ENCODE measurements at regions of chr16 and their contacts with region 1.

Region 1: GRCh38 chr16:68528686-68529379 is 10.3 kb upstream of the ZFP90 start:
- DNase-seq: peak; percentile 91
- H3K4me3 Mint-ChIP-seq: peak overlapping the region; percentile 61
- H3K27ac Mint-ChIP-seq: no peak overlapping the region
- H3K4me1 Mint-ChIP-seq: peaks cover 25% of the 10 kb centered on the region
- H3K27me3 Mint-ChIP-seq: no peaks in the 10 kb centered on the region

Region 2: GRCh38 chr16:68406451-68407152 is 122.2 kb before region 1 on chr16:
- CTCF ChIA-PET with region 1: no interaction called
- POLR2A ChIA-PET with region 1: no interaction called
- DNase-seq: no peak
- H3K4me3 Mint-ChIP-seq: no peak overlapping the region
- H3K27ac Mint-ChIP-seq: no peak overlapping the region
- H3K4me1 Mint-ChIP-seq: peaks cover 2% of the 10 kb centered on the region
- H3K27me3 Mint-ChIP-seq: peaks cover 13% of the 10 kb centered on the region

Region 3: DNA sequence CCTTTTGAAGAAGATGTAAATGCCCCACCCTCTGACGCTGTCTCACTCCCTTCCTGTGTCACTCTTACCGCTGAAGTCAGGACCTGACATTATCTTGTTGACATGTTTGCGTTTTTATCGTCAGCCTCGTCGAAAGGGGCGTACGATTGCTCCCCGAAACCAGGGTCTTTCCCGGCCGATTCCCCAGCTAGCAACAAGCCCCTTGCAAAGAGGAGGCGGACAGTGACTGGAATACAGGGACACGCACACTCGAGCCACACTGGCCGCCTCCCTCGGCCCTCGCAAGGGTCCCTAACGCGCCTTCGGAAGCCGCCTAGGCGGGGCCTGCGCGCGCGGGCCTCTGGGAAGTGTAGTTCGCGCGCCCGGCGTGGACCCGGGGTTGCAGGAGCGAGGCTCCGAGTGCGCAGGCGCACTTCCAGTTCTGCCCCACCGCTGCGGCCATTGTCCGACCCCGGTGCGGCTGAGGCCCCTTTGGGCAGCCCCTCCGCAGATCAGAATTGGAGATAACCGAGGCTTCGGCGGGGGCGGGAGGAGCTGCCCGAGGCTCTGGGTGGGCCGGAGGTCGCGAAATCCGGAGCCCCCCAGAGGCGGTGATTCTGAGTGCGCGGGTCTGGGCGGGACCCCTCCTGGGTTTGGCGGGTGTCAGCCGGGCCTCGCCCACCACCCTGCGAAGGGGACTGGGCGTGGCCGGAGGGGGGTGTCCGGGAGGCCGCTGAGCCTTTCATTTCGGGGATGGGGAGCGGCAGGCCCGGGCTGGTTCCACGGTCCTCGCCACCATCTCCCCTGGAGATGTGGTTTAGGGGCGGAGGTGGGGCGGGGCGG is 10.3 kb after region 1 on chr16 and contains the start of gene ZFP90:
- CTCF ChIA-PET with region 1: interaction called, 5 read pairs
- POLR2A ChIA-PET with region 1: interaction called, 20 read pairs
- DNase-seq: peak; percentile 88
- H3K4me3 Mint-ChIP-seq: peak within 1 kb of the TSS; percentile 90
- H3K27ac Mint-ChIP-seq: peak within 1 kb of the TSS; percentile 95
- H3K4me1 Mint-ChIP-seq: peaks cover 19% of the 10 kb centered on the region
- H3K27me3 Mint-ChIP-seq: no peaks in the 10 kb centered on the region
- total RNA-seq, gene ZFP90: 35.2 to 36.5 TPM

Region 4: DNA sequence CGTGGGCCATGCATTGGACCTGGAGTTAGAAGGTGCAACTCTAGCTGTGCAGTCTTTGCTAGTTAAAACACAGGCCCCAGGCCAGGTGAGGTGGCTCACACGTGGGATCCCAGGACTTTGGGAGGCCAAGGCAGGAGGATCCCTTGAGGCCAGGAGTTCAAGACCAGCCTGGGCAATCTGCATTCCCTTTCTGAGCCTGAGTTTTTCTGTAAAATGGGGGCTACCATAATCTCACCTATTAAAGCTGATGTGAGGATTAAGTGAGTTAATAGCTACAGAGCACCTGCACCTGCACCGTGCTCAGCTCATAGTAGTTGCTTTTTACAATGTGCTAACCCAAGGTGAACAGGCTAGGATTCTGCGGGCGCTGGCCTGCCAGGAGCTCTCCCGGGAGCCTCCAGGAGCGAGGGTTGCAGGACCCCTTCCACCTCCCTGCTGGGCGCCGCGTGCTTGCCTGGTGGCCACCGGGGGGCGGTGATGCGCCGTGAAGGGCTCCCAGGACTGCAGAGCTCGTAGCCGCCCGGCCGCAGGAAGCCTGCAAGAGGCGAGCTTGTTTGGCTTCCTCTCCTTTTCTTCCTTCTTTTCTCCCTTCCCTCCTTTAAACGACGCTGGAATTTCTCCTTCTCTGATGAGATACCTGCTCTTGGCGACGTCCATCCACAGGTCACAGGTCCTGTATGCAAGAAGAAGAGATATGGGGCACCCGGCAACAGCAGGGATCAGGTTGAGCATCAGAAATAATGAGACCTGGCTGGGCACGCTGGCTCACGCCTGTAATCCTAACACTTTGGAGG is 61.6 kb after region 1 on chr16:
- CTCF ChIA-PET with region 1: interaction called, 52 read pairs
- POLR2A ChIA-PET with region 1: interaction called, 4 read pairs
- DNase-seq: peak; percentile 60
- H3K4me3 Mint-ChIP-seq: no peak overlapping the region
- H3K27ac Mint-ChIP-seq: no peak overlapping the region
- H3K4me1 Mint-ChIP-seq: peaks cover 2% of the 10 kb centered on the region
- H3K27me3 Mint-ChIP-seq: no peaks in the 10 kb centered on the region

Region 5: DNA sequence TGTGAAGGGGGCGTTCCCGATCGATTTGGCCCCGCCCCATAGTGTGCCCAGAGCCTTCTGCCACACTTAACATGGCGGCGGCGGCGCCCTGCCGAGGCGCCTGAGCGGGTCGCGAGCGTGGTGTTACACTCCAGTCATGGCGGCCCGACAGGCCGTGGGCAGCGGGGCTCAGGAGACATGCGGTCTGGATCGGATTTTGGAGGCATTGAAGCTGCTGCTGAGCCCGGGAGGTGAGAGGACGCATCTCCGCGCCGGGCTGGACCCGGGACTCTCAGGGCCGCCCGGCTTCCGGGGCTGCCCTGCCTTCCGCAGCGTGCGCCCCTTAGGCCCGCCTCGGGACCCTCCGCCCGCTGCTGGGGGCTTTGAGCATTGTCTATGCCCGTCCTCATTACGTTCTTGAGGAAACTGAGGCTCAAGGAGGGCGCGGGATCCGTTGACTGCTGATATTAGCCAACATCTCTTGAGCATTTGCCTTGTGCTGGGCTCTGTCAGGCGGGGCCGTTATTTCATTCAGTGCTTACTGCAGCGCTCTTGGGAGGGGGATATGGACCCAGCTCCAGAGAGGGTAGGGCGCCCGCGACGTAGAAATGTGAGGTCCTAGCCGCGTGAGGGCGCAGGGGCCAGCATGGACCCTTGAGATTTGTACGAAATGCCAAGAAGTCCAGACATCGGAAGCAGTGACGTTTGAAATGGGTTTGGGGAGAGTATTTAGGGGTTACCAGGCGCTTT is 314.8 kb after region 1 on chr16 and contains the start of gene TANGO6:
- CTCF ChIA-PET with region 1: interaction called, 10 read pairs
- POLR2A ChIA-PET with region 1: no interaction called
- DNase-seq: peak; percentile 89
- H3K4me3 Mint-ChIP-seq: peak within 1 kb of the TSS; percentile 97
- H3K27ac Mint-ChIP-seq: peak within 1 kb of the TSS; percentile 82
- H3K4me1 Mint-ChIP-seq: peaks cover 35% of the 10 kb centered on the region
- H3K27me3 Mint-ChIP-seq: no peaks in the 10 kb centered on the region
- total RNA-seq, gene TANGO6: 20.7 to 22.3 TPM